WTC11 (cell line): ENCODE measurements at regions of chr19 and their contacts with region 1.

Region 1: DNA sequence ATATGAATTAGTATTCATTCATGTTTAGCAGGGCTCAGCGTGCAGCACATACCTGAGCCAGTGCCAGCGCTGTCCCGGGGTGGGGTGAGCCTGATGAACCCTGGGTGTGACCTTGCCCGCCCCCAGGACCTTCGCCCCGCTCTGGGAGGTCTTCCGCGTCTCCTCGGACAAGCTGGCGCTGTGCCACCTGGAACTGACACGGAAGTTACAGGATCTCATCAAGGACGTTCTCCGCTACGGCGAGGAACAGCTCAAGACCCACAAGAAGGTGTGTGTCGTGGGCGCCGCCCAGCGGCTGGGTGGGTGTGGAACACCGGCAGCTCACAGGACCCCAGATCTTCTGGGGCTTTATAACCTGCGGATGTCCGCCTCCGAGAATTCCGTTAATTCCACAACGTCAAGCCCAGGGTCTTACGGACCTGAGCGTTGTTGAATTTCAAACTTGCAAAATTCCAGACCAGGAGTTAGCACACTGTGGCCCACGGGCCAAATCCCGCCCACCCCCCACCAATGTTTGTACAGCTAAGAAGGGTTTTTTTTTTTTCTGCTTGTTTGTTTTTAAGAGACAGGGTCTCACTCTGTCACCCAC is 15.4 kb downstream of the FCHO1 start:
- DNase-seq: peak; percentile 94
- ATAC-seq: peak; percentile 79
- H3K4me3 Mint-ChIP-seq: peak overlapping the region; percentile 41
- H3K27ac Mint-ChIP-seq: no peak overlapping the region
- H3K4me1 Mint-ChIP-seq: peaks cover 12% of the 10 kb centered on the region
- H3K27me3 Mint-ChIP-seq: no peaks in the 10 kb centered on the region
- CTCF ChIP-seq: peak; percentile 59; the same call in 1 of the 2 replicates

Region 2: DNA sequence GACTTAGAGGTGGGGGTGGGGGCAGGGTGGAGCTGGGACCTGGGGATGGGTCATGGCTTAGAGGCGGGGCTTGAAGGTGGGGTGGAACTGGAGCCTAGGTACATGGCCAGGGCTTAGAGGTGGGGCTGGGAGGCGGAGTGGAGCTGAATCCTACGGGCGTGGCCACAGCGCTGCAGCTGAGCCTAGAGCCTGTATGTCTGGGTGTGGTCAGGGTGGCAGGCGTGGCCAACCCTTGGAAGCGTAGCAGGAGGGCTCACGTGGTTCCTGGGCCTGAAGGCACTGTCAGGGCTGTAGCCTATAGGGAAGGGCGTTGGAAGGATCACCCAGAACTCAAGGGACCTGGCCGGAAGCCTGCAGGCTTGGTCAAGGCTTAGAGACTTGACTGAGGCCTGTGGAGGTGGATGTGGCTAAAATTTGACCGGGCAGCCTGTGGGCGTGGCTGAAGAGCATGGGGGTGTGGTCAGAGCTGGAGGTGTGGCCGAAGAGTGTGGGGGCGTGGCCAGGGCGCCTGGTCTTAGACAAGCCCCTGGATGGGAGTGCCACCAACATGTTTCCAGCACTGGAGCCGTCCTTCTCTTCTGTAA is 186.9 kb before region 1 on chr19:
- CTCF ChIA-PET with region 1: interaction called, 11 read pairs
- POLR2A ChIA-PET with region 1: no interaction called
- DNase-seq: peak; percentile 93
- ATAC-seq: peak; percentile 71
- H3K4me3 Mint-ChIP-seq: peak overlapping the region; percentile 60
- H3K27ac Mint-ChIP-seq: peak overlapping the region; percentile 97
- H3K4me1 Mint-ChIP-seq: peaks cover 25% of the 10 kb centered on the region
- H3K27me3 Mint-ChIP-seq: no peaks in the 10 kb centered on the region
- CTCF ChIP-seq: no peak

Region 3: DNA sequence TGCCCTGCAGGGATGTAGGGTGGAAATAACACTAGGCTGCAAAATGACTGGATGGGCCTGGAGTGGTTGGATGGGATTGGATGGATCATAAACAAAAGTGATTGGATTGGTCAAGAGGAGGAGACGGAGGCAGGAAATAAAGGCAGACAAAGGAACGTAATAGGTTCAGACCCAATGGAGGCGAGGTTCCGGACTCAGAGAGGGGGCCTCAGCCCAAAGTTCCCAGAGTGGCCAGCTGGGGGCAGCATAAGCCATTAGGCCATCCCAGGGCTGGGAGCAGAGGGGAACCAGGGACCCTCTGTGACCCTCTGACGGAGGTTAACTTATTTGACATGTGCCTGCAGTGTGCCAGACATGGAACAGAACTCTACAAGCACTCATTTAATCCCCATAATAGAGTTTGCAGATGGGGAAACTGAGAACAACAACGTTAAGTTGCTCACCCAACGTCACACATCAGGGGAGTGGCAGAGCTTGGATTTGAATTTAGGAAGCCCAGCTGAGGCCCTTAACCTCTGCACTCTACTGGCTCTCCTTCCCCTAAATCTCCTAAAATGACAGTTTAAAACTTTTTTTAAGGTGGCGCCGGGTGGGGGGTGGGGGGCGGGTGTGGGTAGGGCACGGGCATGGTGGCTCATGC is 62.7 kb before region 1 on chr19:
- CTCF ChIA-PET with region 1: interaction called, 30 read pairs
- POLR2A ChIA-PET with region 1: no interaction called
- DNase-seq: peak; percentile 89
- ATAC-seq: peak; percentile 83
- H3K4me3 Mint-ChIP-seq: no peak overlapping the region
- H3K27ac Mint-ChIP-seq: no peak overlapping the region
- H3K4me1 Mint-ChIP-seq: peaks cover 4% of the 10 kb centered on the region; the same call in 1 of the 2 replicates
- H3K27me3 Mint-ChIP-seq: peaks cover 30% of the 10 kb centered on the region
- CTCF ChIP-seq: peak; percentile 83

Region 4: DNA sequence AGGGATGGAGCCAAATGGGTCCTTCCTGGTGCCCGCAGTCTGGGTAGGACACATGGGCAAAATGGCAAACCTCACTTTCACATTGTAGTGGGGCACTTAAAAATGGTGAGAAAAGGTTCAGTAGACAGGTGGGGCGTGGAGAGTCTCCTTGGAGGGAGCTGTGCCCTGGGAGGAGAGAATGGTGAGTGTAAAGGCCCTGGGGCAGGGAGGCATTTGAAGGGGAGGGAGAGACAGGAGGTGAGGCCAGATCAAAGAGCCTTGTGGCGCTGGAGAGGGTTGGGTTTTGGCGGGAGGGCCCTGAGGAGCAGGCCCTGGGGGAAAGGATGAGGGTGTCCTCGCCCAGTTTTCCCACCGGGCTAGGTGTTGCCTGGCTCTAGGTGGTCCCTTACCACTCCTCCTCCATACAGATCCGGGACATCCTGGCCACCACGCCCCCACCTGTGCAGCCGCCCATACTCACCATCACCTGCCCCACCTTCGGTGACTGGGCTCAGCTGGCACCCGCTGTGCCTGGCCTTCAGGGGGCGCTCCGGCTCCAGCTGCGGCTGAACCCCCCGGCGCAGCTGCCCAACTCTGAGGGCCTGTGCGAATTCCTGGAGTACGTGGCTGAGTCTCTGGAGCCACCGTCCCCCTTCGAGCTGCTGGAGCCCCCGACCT is 41.1 kb before region 1 on chr19:
- CTCF ChIA-PET with region 1: interaction called, 26 read pairs
- POLR2A ChIA-PET with region 1: no interaction called
- DNase-seq: peak; percentile 77
- ATAC-seq: peak; percentile 91
- H3K4me3 Mint-ChIP-seq: no peak overlapping the region
- H3K27ac Mint-ChIP-seq: peak overlapping the region; percentile 33; the same call in 1 of the 2 replicates
- H3K4me1 Mint-ChIP-seq: peaks cover 11% of the 10 kb centered on the region
- H3K27me3 Mint-ChIP-seq: no peaks in the 10 kb centered on the region
- CTCF ChIP-seq: peak; percentile 76

Region 5: GRCh38 chr19:17747205-17748098 is 19.2 kb before region 1 on chr19:
- CTCF ChIA-PET with region 1: interaction called, 27 read pairs
- POLR2A ChIA-PET with region 1: no interaction called
- DNase-seq: peak; percentile 94
- ATAC-seq: peak; percentile 99
- H3K4me3 Mint-ChIP-seq: peak overlapping the region; percentile 66
- H3K27ac Mint-ChIP-seq: no peak overlapping the region
- H3K4me1 Mint-ChIP-seq: peaks cover 9% of the 10 kb centered on the region
- H3K27me3 Mint-ChIP-seq: peaks cover 12% of the 10 kb centered on the region
- CTCF ChIP-seq: no peak